B cell (primary cell): ENCODE measurements at regions of chr11 and their contacts with region 1.

Region 1: GRCh38 chr11:128831174-128832120 is 35.6 kb downstream of the KCNJ1 start:
- DNase-seq: peak; percentile 88
- ATAC-seq: peak; percentile 89
- H3K4me3 ChIP-seq: peak overlapping the region; percentile 22 to 55 (median 36)
- H3K4me3 Mint-ChIP-seq: peak overlapping the region; percentile 74
- H3K27ac ChIP-seq: peak overlapping the region; percentile 60 to 78
- H3K27ac Mint-ChIP-seq: peak overlapping the region; percentile 90
- H3K4me1 ChIP-seq: peaks cover 66 to 68% of the 10 kb centered on the region in 2 donors
- H3K4me1 Mint-ChIP-seq: peaks cover 73% of the 10 kb centered on the region
- H3K27me3 ChIP-seq: no peaks in the 10 kb centered on the region
- H3K27me3 Mint-ChIP-seq: no peaks in the 10 kb centered on the region
- CTCF ChIP-seq: peak; percentile 93

Region 2: GRCh38 chr11:128039140-128040021 is 792.1 kb before region 1 on chr11:
- CTCF ChIA-PET with region 1: no interaction called
- POLR2A ChIA-PET with region 1: no interaction called
- intact Hi-C with region 1: loop called (anchors 10 kb)
- DNase-seq: peak; percentile 43
- ATAC-seq: peak; percentile 66
- H3K4me3 ChIP-seq: no peak overlapping the region
- H3K4me3 Mint-ChIP-seq: no peak overlapping the region
- H3K27ac ChIP-seq: no peak overlapping the region
- H3K27ac Mint-ChIP-seq: no peak overlapping the region
- H3K4me1 ChIP-seq: peaks cover 19 to 20% of the 10 kb centered on the region in 2 donors
- H3K4me1 Mint-ChIP-seq: peaks cover 17% of the 10 kb centered on the region
- H3K27me3 ChIP-seq: peaks cover 0 to 9% (median 4%) of the 10 kb centered on the region in 4 experiments
- H3K27me3 Mint-ChIP-seq: peaks cover 16% of the 10 kb centered on the region
- CTCF ChIP-seq: no peak

Region 3: GRCh38 chr11:128164080-128164741 is 667.2 kb before region 1 on chr11:
- CTCF ChIA-PET with region 1: interaction called, 63 read pairs
- POLR2A ChIA-PET with region 1: no interaction called
- intact Hi-C with region 1: no loop called
- DNase-seq: no peak
- ATAC-seq: no peak
- H3K4me3 ChIP-seq: no peak overlapping the region
- H3K4me3 Mint-ChIP-seq: no peak overlapping the region
- H3K27ac ChIP-seq: no peak overlapping the region
- H3K27ac Mint-ChIP-seq: no peak overlapping the region
- H3K4me1 ChIP-seq: peaks cover 4 to 5% of the 10 kb centered on the region in 2 donors
- H3K4me1 Mint-ChIP-seq: peaks cover 4% of the 10 kb centered on the region
- H3K27me3 ChIP-seq: peaks cover 0 to 4% (median 0%) of the 10 kb centered on the region in 4 experiments
- H3K27me3 Mint-ChIP-seq: peaks cover 14% of the 10 kb centered on the region
- CTCF ChIP-seq: no peak

Region 4: GRCh38 chr11:128603752-128604414 is 227.6 kb before region 1 on chr11:
- CTCF ChIA-PET with region 1: interaction called, 21 read pairs
- POLR2A ChIA-PET with region 1: no interaction called
- intact Hi-C with region 1: no loop called
- DNase-seq: peak; percentile 63
- ATAC-seq: peak; percentile 69
- H3K4me3 ChIP-seq: no peak overlapping the region
- H3K4me3 Mint-ChIP-seq: peak overlapping the region; percentile 35
- H3K27ac ChIP-seq: peak overlapping the region in 1 of 2 donors; percentile 10
- H3K27ac Mint-ChIP-seq: peak overlapping the region; percentile 72
- H3K4me1 ChIP-seq: peaks cover 55 to 59% of the 10 kb centered on the region in 2 donors
- H3K4me1 Mint-ChIP-seq: peaks cover 72% of the 10 kb centered on the region
- H3K27me3 ChIP-seq: no peaks in the 10 kb centered on the region
- H3K27me3 Mint-ChIP-seq: no peaks in the 10 kb centered on the region
- CTCF ChIP-seq: no peak

Region 5: GRCh38 chr11:128776424-128777284 is 54.8 kb before region 1 on chr11:
- CTCF ChIA-PET with region 1: interaction called, 23 read pairs
- POLR2A ChIA-PET with region 1: no interaction called
- intact Hi-C with region 1: loop called (anchors 2 kb)
- DNase-seq: peak; percentile 58
- ATAC-seq: peak; percentile 35
- H3K4me3 ChIP-seq: no peak overlapping the region
- H3K4me3 Mint-ChIP-seq: no peak overlapping the region
- H3K27ac ChIP-seq: no peak overlapping the region
- H3K27ac Mint-ChIP-seq: peak overlapping the region; percentile 51
- H3K4me1 ChIP-seq: peaks cover 25 to 36% of the 10 kb centered on the region in 2 donors
- H3K4me1 Mint-ChIP-seq: peaks cover 42% of the 10 kb centered on the region
- H3K27me3 ChIP-seq: no peaks in the 10 kb centered on the region
- H3K27me3 Mint-ChIP-seq: no peaks in the 10 kb centered on the region
- CTCF ChIP-seq: peak; percentile 60

Region 6: DNA sequence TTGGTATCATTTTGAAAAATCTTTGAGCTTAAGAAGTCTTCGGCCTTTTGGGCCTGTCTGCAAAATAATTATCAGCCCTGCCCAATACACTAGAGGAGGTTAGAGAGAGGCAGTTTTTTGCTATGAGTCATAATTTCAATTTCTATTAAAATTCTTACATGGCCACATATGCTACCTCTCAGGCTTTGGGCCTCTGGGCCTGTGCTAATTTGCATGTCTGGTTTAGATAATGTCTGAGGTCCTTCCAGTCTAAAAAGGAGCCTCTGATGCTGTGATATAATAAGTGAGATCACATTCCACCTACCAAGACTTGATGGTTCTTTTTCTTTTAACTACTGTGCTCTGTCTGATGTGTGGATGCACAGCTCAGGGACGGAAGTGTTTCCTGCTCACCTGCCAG is 35.2 kb before region 1 on chr11:
- CTCF ChIA-PET with region 1: interaction called, 5 read pairs
- POLR2A ChIA-PET with region 1: no interaction called
- intact Hi-C with region 1: loop called (anchors 5 kb)
- DNase-seq: peak; percentile 25
- ATAC-seq: peak; percentile 78
- H3K4me3 ChIP-seq: no peak overlapping the region
- H3K4me3 Mint-ChIP-seq: peak overlapping the region; percentile 24
- H3K27ac ChIP-seq: peak overlapping the region in 1 of 2 donors; percentile 65
- H3K27ac Mint-ChIP-seq: peak overlapping the region; percentile 84
- H3K4me1 ChIP-seq: peaks cover 5 to 11% of the 10 kb centered on the region in 2 donors
- H3K4me1 Mint-ChIP-seq: peaks cover 32% of the 10 kb centered on the region
- H3K27me3 ChIP-seq: no peaks in the 10 kb centered on the region
- H3K27me3 Mint-ChIP-seq: no peaks in the 10 kb centered on the region
- CTCF ChIP-seq: no peak

Region 7: GRCh38 chr11:128848815-128849455 is 17.5 kb after region 1 on chr11:
- CTCF ChIA-PET with region 1: interaction called, 417 read pairs
- POLR2A ChIA-PET with region 1: interaction called, 4 read pairs
- intact Hi-C with region 1: loop called (anchors 1 kb)
- DNase-seq: peak; percentile 77
- ATAC-seq: peak; percentile 72
- H3K4me3 ChIP-seq: no peak overlapping the region
- H3K4me3 Mint-ChIP-seq: no peak overlapping the region
- H3K27ac ChIP-seq: no peak overlapping the region
- H3K27ac Mint-ChIP-seq: peak overlapping the region; percentile 65
- H3K4me1 ChIP-seq: peaks cover 45 to 60% of the 10 kb centered on the region in 2 donors
- H3K4me1 Mint-ChIP-seq: peaks cover 52% of the 10 kb centered on the region
- H3K27me3 ChIP-seq: no peaks in the 10 kb centered on the region
- H3K27me3 Mint-ChIP-seq: no peaks in the 10 kb centered on the region
- CTCF ChIP-seq: peak; percentile 91

Region 8: GRCh38 chr11:128876111-128876650 is 44.7 kb after region 1 on chr11:
- CTCF ChIA-PET with region 1: no interaction called
- POLR2A ChIA-PET with region 1: no interaction called
- intact Hi-C with region 1: no loop called
- DNase-seq: no peak
- ATAC-seq: no peak
- H3K4me3 ChIP-seq: no peak overlapping the region
- H3K4me3 Mint-ChIP-seq: no peak overlapping the region
- H3K27ac ChIP-seq: no peak overlapping the region
- H3K27ac Mint-ChIP-seq: no peak overlapping the region
- H3K4me1 ChIP-seq: no peaks in the 10 kb centered on the region
- H3K4me1 Mint-ChIP-seq: no peaks in the 10 kb centered on the region
- H3K27me3 ChIP-seq: peaks cover 0 to 24% (median 5%) of the 10 kb centered on the region in 4 experiments
- H3K27me3 Mint-ChIP-seq: peaks cover 56% of the 10 kb centered on the region
- CTCF ChIP-seq: no peak

Region 9: GRCh38 chr11:128936606-128937251 is 105.3 kb after region 1 on chr11:
- CTCF ChIA-PET with region 1: no interaction called
- POLR2A ChIA-PET with region 1: no interaction called
- intact Hi-C with region 1: no loop called
- DNase-seq: no peak
- ATAC-seq: no peak
- H3K4me3 ChIP-seq: no peak overlapping the region
- H3K4me3 Mint-ChIP-seq: no peak overlapping the region
- H3K27ac ChIP-seq: no peak overlapping the region
- H3K27ac Mint-ChIP-seq: no peak overlapping the region
- H3K4me1 ChIP-seq: no peaks in the 10 kb centered on the region
- H3K4me1 Mint-ChIP-seq: no peaks in the 10 kb centered on the region
- H3K27me3 ChIP-seq: peaks cover 0 to 23% (median 0%) of the 10 kb centered on the region in 4 experiments
- H3K27me3 Mint-ChIP-seq: peaks cover 28% of the 10 kb centered on the region
- CTCF ChIP-seq: no peak